Mammary epithelial cell (primary cell): ENCODE measurements at regions of chr7 and their contacts with region 1.

Region 1: DNA sequence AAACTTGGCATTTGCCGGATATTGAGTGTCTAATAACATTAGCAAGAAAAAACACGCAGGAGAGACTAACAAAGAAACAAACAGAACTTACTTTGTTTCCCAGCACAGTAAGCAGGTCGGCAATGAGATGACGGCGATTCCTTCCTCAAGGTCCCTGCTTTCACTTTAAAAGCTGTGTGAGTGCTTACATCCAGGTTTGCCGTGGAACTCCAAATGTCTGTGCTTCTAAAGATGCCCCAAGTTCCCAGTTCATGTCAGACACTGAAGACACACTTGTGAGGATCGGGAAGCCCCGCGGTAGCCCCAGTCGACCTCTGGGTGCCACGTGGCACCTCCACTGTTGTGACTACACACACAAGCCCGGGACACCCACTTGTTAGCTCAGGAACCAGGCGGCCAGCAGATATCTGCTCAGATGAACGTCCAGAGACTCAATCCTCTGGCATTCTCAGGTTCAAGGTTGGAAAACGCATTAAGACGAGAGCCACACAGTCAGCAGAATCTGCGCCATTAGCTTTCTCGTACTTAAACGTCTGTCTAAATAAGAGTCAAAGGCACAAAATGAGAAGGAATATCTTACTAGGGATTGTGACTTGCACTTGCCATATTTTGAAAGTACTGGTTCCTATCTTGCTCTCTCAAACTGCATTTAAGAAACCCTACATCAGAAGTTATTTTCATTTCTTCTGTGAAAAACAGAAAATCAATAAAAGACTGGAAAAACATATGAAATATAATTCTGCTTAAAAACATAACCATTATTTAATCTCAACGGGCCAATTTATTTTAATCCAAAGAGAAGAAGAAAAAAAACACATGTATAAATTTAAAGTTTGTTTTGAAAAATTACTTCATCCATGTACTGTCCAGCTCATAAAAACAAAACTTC is 207.6 kb upstream of the KLF14 start:
- DNase-seq: peak; percentile 79
- H3K4me3 ChIP-seq: peak overlapping the region; percentile 41 to 48 (median 45)
- H3K27ac ChIP-seq: peak overlapping the region; percentile 95
- H3K4me1 ChIP-seq: peaks cover 34% of the 10 kb centered on the region
- H3K27me3 ChIP-seq: no peaks in the 10 kb centered on the region
- CTCF ChIP-seq: no peak

Region 2: DNA sequence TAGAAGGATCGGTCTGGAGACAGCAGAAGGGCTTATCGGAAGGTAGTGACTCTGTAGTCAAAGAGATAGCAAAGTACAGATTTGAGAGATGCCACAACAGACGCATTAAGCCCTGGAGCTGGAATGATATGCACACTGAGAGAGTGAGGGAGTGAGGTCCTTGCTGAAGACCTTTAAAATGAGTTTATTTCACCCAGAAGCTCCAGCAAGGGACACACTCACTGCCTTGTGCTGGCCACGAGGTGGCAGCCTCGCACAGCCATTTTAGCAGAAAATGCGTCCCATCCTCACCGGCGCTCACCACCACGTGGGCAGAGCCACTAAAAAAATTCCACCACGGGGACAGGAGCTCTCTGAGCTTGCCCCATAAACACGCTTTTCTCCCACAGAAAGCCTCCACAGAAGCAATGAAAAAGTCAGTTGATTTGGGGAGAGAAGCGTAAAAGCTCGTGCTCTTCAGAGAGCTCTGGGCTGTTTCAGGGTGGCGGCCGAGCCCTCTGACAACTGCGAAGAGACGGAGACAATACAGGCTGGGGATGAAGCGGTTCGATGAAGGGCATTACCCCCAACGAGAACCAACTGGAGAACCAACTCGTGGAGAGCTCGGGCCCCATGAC is 44.6 kb before region 1 on chr7:
- CTCF ChIA-PET with region 1: no interaction called
- dilution Hi-C with region 1: no loop called
- in situ Hi-C with region 1: no loop called
- intact Hi-C with region 1: loop called (anchors 1 kb)
- DNase-seq: no peak
- H3K4me3 ChIP-seq: no peak overlapping the region
- H3K27ac ChIP-seq: no peak overlapping the region
- H3K4me1 ChIP-seq: peaks cover 83% of the 10 kb centered on the region
- H3K27me3 ChIP-seq: no peaks in the 10 kb centered on the region
- CTCF ChIP-seq: peak; percentile 76 to 80

Region 3: DNA sequence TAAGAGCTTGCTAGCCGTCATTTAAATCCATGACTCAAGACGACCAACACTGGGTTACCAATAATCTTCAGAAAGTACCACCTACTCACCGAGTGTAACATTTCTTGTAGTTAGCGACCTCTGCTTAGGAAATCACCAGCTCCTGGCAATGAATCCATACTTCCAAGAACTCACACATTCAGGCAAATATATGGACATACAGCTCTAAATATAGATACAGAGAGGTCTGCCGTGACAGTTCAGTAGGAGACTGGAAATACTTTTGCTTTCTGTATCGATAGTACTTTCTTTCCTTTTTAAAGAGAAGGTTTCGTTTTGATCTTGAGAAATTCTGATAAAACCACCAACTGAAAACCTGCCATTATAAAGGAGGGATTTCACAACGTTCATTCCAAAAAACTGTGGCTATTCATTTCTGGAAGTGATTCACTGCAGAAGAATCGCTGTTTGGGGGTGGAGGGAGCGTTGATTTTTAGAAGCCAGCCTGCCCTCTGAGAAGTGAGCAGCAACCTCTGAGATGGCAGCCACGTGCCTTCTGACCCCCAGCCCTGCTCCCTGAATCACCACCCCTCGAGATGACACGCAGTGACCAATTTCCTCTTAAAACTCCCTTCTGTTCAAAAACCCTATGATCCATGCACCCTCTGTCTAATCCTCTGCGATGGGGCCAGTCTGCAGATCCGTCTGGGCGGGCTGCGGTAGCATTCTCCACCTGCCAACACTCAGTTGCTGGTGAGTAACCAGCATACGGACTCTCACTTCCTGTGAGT is 28.5 kb before region 1 on chr7:
- CTCF ChIA-PET with region 1: no interaction called
- dilution Hi-C with region 1: no loop called
- in situ Hi-C with region 1: no loop called
- intact Hi-C with region 1: loop called (anchors 1 kb)
- DNase-seq: peak; percentile 99
- H3K4me3 ChIP-seq: peak overlapping the region; percentile 50 to 96 (median 90)
- H3K27ac ChIP-seq: peak overlapping the region; percentile 97
- H3K4me1 ChIP-seq: peaks cover 61% of the 10 kb centered on the region
- H3K27me3 ChIP-seq: no peaks in the 10 kb centered on the region
- CTCF ChIP-seq: no peak

Region 4: GRCh38 chr7:130926001-130926691 is 15.4 kb before region 1 on chr7:
- CTCF ChIA-PET with region 1: no interaction called
- dilution Hi-C with region 1: no loop called
- in situ Hi-C with region 1: no loop called
- intact Hi-C with region 1: no loop called
- DNase-seq: no peak
- H3K4me3 ChIP-seq: no peak overlapping the region
- H3K27ac ChIP-seq: no peak overlapping the region
- H3K4me1 ChIP-seq: peaks cover 25% of the 10 kb centered on the region
- H3K27me3 ChIP-seq: no peaks in the 10 kb centered on the region
- CTCF ChIP-seq: no peak

Region 5: GRCh38 chr7:130961128-130961601 is 19.6 kb after region 1 on chr7:
- CTCF ChIA-PET with region 1: no interaction called
- dilution Hi-C with region 1: no loop called
- in situ Hi-C with region 1: no loop called
- intact Hi-C with region 1: loop called (anchors 1 kb)
- DNase-seq: peak; percentile 96
- H3K4me3 ChIP-seq: peak overlapping the region; percentile 41 to 96 (median 75)
- H3K27ac ChIP-seq: peak overlapping the region; percentile 100
- H3K4me1 ChIP-seq: peaks cover 34% of the 10 kb centered on the region
- H3K27me3 ChIP-seq: no peaks in the 10 kb centered on the region
- CTCF ChIP-seq: no peak

Region 6: GRCh38 chr7:131007394-131008330 is 66.1 kb after region 1 on chr7:
- CTCF ChIA-PET with region 1: no interaction called
- dilution Hi-C with region 1: no loop called
- in situ Hi-C with region 1: no loop called
- intact Hi-C with region 1: loop called (anchors 1 kb)
- DNase-seq: peak; percentile 73
- H3K4me3 ChIP-seq: no peak overlapping the region
- H3K27ac ChIP-seq: peak overlapping the region; percentile 66
- H3K4me1 ChIP-seq: peaks cover 36% of the 10 kb centered on the region
- H3K27me3 ChIP-seq: no peaks in the 10 kb centered on the region
- CTCF ChIP-seq: peak; percentile 37 to 67

Region 7: DNA sequence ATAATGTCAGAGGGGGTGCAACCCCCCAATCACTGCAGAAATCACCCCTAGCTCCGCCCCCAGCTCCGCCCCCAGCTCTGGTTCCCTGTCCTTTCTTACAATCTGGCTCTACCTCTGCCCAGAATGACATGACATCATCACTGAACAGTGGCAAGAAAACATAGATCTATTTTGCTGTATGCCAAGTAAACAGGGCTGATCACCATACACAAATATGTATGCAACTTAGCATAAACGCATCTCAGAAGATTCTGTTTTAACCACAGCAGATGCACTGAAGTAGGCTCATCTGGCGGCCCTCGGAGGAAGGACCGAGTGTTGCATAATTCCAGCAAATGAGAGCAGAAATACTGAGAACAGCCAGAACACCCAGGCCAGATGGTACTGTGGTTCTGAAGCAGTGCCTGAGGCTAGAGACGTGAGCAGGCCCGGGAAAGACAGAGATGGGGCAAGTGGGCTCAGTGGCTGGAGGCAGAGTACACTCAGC is 85.8 kb after region 1 on chr7:
- CTCF ChIA-PET with region 1: no interaction called
- dilution Hi-C with region 1: no loop called
- in situ Hi-C with region 1: no loop called
- intact Hi-C with region 1: loop called (anchors 5 kb)
- DNase-seq: peak; percentile 63
- H3K4me3 ChIP-seq: no peak overlapping the region
- H3K27ac ChIP-seq: peak overlapping the region; percentile 89
- H3K4me1 ChIP-seq: peaks cover 20% of the 10 kb centered on the region
- H3K27me3 ChIP-seq: no peaks in the 10 kb centered on the region
- CTCF ChIP-seq: no peak

Region 8: GRCh38 chr7:131040467-131040932 is 98.9 kb after region 1 on chr7:
- CTCF ChIA-PET with region 1: interaction called, 7 read pairs
- dilution Hi-C with region 1: no loop called
- in situ Hi-C with region 1: no loop called
- intact Hi-C with region 1: loop called (anchors 2 kb)
- DNase-seq: peak; percentile 48
- H3K4me3 ChIP-seq: no peak overlapping the region
- H3K27ac ChIP-seq: peak overlapping the region; percentile 63
- H3K4me1 ChIP-seq: peaks cover 8% of the 10 kb centered on the region
- H3K27me3 ChIP-seq: no peaks in the 10 kb centered on the region
- CTCF ChIP-seq: peak; percentile 93 to 97